SK-N-SH (cell line): ENCODE measurements at regions of chr16 and their contacts with region 1.

Region 1: DNA sequence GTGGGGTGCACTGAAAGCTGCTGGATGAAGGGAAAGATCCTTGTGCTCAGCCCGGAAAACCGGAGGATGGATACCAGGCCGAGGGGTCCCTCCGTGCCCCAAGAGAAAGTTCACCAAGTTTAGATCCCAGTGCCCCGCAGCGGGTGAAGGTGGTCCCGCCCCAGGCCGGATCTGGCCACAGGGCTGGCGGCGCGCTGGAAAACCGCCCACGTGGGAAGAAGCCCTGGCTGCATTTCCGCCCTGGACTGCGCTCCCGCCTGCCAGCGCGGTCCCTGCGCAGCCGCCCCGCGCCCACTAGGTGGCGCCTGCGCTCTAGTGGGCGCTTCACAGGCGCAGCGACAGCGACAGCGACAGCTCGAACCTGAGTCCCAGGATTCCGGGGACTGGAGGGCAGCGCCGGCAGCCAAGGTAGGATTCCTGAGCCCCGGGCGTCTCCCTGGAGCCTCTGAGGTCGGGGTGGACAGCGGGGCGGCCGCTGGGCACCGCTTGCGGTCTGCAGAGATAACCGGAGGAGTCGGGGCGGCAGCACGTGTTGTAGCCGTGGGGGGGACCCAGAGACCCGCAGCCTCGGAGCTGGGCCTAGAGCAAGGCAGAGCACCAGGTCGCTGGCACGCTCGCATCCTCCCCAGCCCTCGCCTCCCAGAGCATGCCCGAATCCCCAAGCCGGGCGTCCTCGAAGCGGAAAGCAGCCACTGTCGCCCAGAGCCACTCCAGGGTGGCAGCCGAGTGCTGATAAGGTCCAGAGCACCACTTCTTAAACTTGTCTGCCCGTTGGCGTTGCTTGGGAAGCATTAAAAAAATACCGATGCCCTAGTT is at the start of gene CHD9:
- DNase-seq: peak; percentile 93
- H3K4me3 ChIP-seq: peak within 1 kb of the TSS; percentile 57 to 95
- H3K27ac ChIP-seq: peak within 1 kb of the TSS; percentile 88 to 91
- H3K4me1 ChIP-seq: peaks cover 12 to 14% of the 10 kb centered on the region in 2 experiments; a peak in 2 of 4 replicates
- H3K27me3 ChIP-seq: no peaks in the 10 kb centered on the region
- CTCF ChIP-seq: peak; percentile 92
- EP300 ChIP-seq: no peak; a peak in 1 of 4 replicates
- RAD21 ChIP-seq: peak; percentile 95
- polyA plus RNA-seq, gene CHD9: 6.2 and 9.2 TPM in 2 replicates

Region 2: GRCh38 chr16:53065461-53066061 is 10.7 kb after region 1 on chr16:
- CTCF ChIA-PET with region 1: interaction called, 25 read pairs
- POLR2A ChIA-PET with region 1: no interaction called
- DNase-seq: no peak
- H3K4me3 ChIP-seq: no peak overlapping the region
- H3K27ac ChIP-seq: peak overlapping the region; percentile 52 to 74; a peak in 3 of 4 replicates
- H3K4me1 ChIP-seq: peaks cover 6 to 8% of the 10 kb centered on the region in 2 experiments; a peak in 2 of 4 replicates
- H3K27me3 ChIP-seq: no peaks in the 10 kb centered on the region
- CTCF ChIP-seq: no peak
- EP300 ChIP-seq: no peak
- RAD21 ChIP-seq: no peak

Region 3: GRCh38 chr16:53091466-53092211 is 36.8 kb after region 1 on chr16:
- CTCF ChIA-PET with region 1: interaction called, 20 read pairs
- POLR2A ChIA-PET with region 1: no interaction called
- DNase-seq: peak; percentile 76
- H3K4me3 ChIP-seq: peak overlapping the region; percentile 13 to 37; a peak in 2 of 4 replicates
- H3K27ac ChIP-seq: peak overlapping the region; percentile 98 to 100
- H3K4me1 ChIP-seq: peaks cover 40 to 48% of the 10 kb centered on the region in 2 experiments
- H3K27me3 ChIP-seq: no peaks in the 10 kb centered on the region
- CTCF ChIP-seq: no peak
- EP300 ChIP-seq: peak; percentile 55 to 56; a peak in 3 of 4 replicates
- RAD21 ChIP-seq: peak; percentile 29

Region 4: GRCh38 chr16:53130159-53131049 is 75.5 kb after region 1 on chr16:
- CTCF ChIA-PET with region 1: interaction called, 24 read pairs
- POLR2A ChIA-PET with region 1: interaction called, 10 read pairs
- DNase-seq: peak; percentile 99
- H3K4me3 ChIP-seq: peak overlapping the region; percentile 68 to 83
- H3K27ac ChIP-seq: peak overlapping the region; percentile 86 to 91
- H3K4me1 ChIP-seq: peaks cover 9 to 14% of the 10 kb centered on the region in 2 experiments; a peak in 3 of 4 replicates
- H3K27me3 ChIP-seq: no peaks in the 10 kb centered on the region
- CTCF ChIP-seq: no peak; the same call in 1 of the 2 replicates
- EP300 ChIP-seq: no peak
- RAD21 ChIP-seq: peak; percentile 70

Region 5: GRCh38 chr16:53159781-53160436 is 105.0 kb after region 1 on chr16:
- CTCF ChIA-PET with region 1: interaction called, 33 read pairs
- POLR2A ChIA-PET with region 1: no interaction called
- DNase-seq: peak; percentile 43
- H3K4me3 ChIP-seq: no peak overlapping the region
- H3K27ac ChIP-seq: no peak overlapping the region
- H3K4me1 ChIP-seq: no peaks in the 10 kb centered on the region
- H3K27me3 ChIP-seq: no peaks in the 10 kb centered on the region
- CTCF ChIP-seq: peak; percentile 78
- EP300 ChIP-seq: no peak
- RAD21 ChIP-seq: peak; percentile 76

Region 6: GRCh38 chr16:53282975-53283946 is 228.4 kb after region 1 on chr16:
- CTCF ChIA-PET with region 1: interaction called, 22 read pairs
- POLR2A ChIA-PET with region 1: no interaction called
- DNase-seq: peak; percentile 51
- H3K4me3 ChIP-seq: no peak overlapping the region
- H3K27ac ChIP-seq: no peak overlapping the region; a peak in 1 of 4 replicates
- H3K4me1 ChIP-seq: no peaks in the 10 kb centered on the region; a peak in 1 of 4 replicates
- H3K27me3 ChIP-seq: no peaks in the 10 kb centered on the region
- CTCF ChIP-seq: peak; percentile 77
- EP300 ChIP-seq: no peak
- RAD21 ChIP-seq: peak; percentile 79